Endothelial cell of umbilical vein (primary cell): ENCODE measurements at regions of chr7 and their contacts with region 1.

Region 1: GRCh38 chr7:103752997-103753396 is 236.5 kb downstream of the RELN start:
- DNase-seq: peak; percentile 21
- H3K4me3 ChIP-seq: no peak overlapping the region
- H3K27ac ChIP-seq: no peak overlapping the region
- H3K4me1 ChIP-seq: no peaks in the 10 kb centered on the region
- H3K27me3 ChIP-seq: no peaks in the 10 kb centered on the region
- CTCF ChIP-seq: no peak
- POLR2A ChIP-seq: no peak

Region 2: GRCh38 chr7:103474956-103475355 is 278.0 kb before region 1 on chr7:
- CTCF ChIA-PET with region 1: no interaction called
- POLR2A ChIA-PET with region 1: no interaction called
- dilution Hi-C with region 1: no loop called
- intact Hi-C with region 1: no loop called
- DNase-seq: no peak
- H3K4me3 ChIP-seq: no peak overlapping the region
- H3K27ac ChIP-seq: no peak overlapping the region
- H3K4me1 ChIP-seq: no peaks in the 10 kb centered on the region
- H3K27me3 ChIP-seq: peaks cover 0 to 19% of the 10 kb centered on the region in 2 experiments
- CTCF ChIP-seq: no peak
- POLR2A ChIP-seq: no peak

Region 3: DNA sequence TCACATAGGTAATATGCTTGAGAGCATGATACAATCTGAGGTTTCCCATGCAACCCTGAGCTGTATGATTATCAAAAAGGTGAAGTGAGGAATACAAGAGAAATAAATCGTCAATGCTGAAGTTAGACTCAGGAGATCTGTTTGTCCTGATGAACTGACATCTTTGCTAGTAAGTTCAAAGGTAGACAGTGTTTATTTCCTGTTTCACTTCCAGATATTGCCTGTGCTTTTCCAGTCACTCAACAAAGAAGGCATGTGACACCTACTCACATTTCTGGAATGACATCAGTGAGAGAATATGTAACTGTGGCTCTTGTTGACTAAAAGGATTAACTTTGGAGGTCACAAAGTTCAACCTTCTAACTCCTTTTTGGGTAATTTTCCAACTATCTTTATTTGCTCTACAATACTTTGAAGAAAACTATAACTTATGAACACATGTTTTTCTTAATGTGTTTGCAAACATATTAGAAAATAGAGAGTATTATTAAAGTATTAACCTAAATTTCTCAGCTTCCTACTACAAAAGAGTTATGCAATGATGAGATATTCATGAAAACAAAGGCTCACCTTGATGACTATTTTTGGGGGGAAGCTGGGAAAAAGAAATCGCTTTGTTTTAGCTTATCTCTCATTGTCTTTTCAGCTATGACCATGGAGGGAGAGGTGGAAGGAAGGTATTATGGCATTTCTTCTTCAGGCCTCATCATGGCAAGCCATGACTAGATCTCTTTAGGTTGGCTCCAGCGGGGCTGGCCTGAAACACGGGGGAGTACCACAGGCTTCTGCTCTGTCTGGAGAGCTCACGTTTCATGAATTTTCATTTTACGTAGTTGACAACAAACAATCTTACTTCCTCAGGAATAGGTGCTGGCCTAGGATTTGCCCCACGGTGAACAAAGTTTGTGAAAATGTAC is 92.3 kb before region 1 on chr7:
- CTCF ChIA-PET with region 1: no interaction called
- POLR2A ChIA-PET with region 1: no interaction called
- dilution Hi-C with region 1: no loop called
- intact Hi-C with region 1: loop called (anchors 5 kb)
- DNase-seq: peak; percentile 79
- H3K4me3 ChIP-seq: no peak overlapping the region
- H3K27ac ChIP-seq: no peak overlapping the region
- H3K4me1 ChIP-seq: peaks cover 3% of the 10 kb centered on the region
- H3K27me3 ChIP-seq: no peaks in the 10 kb centered on the region
- CTCF ChIP-seq: no peak
- POLR2A ChIP-seq: no peak

Region 4: DNA sequence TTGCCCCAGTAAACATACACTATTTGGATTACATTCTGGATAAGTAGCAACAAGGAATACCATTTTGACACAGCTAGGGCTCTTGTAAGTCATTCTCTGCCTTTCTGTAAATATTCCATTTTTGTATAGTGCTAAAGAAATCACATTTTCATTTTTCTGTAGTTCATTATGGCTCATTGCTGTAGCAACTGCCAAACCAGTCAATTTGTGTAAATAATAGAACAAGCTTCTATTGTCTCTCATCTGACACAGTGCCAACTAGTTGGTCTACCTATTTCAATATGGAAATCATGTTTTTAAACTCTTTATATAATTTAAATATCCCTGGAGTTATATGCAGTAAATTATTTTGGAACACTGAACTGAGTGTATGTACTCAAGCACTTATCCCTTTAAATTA is 42.8 kb after region 1 on chr7:
- CTCF ChIA-PET with region 1: no interaction called
- POLR2A ChIA-PET with region 1: no interaction called
- dilution Hi-C with region 1: no loop called
- intact Hi-C with region 1: no loop called
- DNase-seq: no peak
- H3K4me3 ChIP-seq: no peak overlapping the region
- H3K27ac ChIP-seq: no peak overlapping the region
- H3K4me1 ChIP-seq: no peaks in the 10 kb centered on the region
- H3K27me3 ChIP-seq: no peaks in the 10 kb centered on the region
- CTCF ChIP-seq: no peak
- POLR2A ChIP-seq: no peak

Region 5: GRCh38 chr7:103972779-103973434 is 219.9 kb after region 1 on chr7:
- CTCF ChIA-PET with region 1: no interaction called
- POLR2A ChIA-PET with region 1: no interaction called
- dilution Hi-C with region 1: no loop called
- intact Hi-C with region 1: no loop called
- DNase-seq: no peak
- H3K4me3 ChIP-seq: no peak overlapping the region
- H3K27ac ChIP-seq: no peak overlapping the region
- H3K4me1 ChIP-seq: no peaks in the 10 kb centered on the region
- H3K27me3 ChIP-seq: no peaks in the 10 kb centered on the region
- CTCF ChIP-seq: no peak
- POLR2A ChIP-seq: no peak